Gastrocnemius medialis (tissue), 4 donors: ENCODE measurements at regions of chr15 and their contacts with region 1.

Region 1: GRCh38 chr15:60326824-60327654 is 70.7 kb downstream of the ANXA2 start:
- DNase-seq: no peak
- ATAC-seq: peak in 1 of 2 donors; percentile 53
- H3K4me3 ChIP-seq: no peak overlapping the region
- H3K27ac ChIP-seq: no peak overlapping the region
- H3K4me1 ChIP-seq: peaks cover 0 to 4% of the 10 kb centered on the region in 2 donors
- H3K27me3 ChIP-seq: peaks cover 0 to 2% (median 0%) of the 10 kb centered on the region in 3 donors
- CTCF ChIP-seq: peak; percentile 51 to 85 (median 80)
- POLR2A ChIP-seq: no peak

Region 2: GRCh38 chr15:59528965-59529402 is 798.1 kb before region 1 on chr15:
- in situ Hi-C with region 1: no loop called
- intact Hi-C with region 1: loop called (anchors 5 kb)
- DNase-seq: peak; percentile 48 to 62
- ATAC-seq: peak; percentile 93 to 98
- H3K4me3 ChIP-seq: no peak overlapping the region
- H3K27ac ChIP-seq: no peak overlapping the region
- H3K4me1 ChIP-seq: no peaks in the 10 kb centered on the region
- H3K27me3 ChIP-seq: peaks cover 0 to 7% (median 4%) of the 10 kb centered on the region in 3 donors
- CTCF ChIP-seq: peak; percentile 60 to 83 (median 70)
- POLR2A ChIP-seq: no peak

Region 3: GRCh38 chr15:59725172-59725486 is 601.9 kb before region 1 on chr15:
- in situ Hi-C with region 1: loop called in 3 of 4 experiments (anchors 10 to 25 kb)
- intact Hi-C with region 1: loop called (anchors 10 kb)
- DNase-seq: no peak
- ATAC-seq: no peak
- H3K4me3 ChIP-seq: no peak overlapping the region
- H3K27ac ChIP-seq: peak overlapping the region; percentile 44 to 71 (median 59)
- H3K4me1 ChIP-seq: peaks cover 3 to 11% of the 10 kb centered on the region in 2 donors
- H3K27me3 ChIP-seq: no peaks in the 10 kb centered on the region
- CTCF ChIP-seq: peak in 1 of 5 experiments; percentile 5
- POLR2A ChIP-seq: no peak

Region 4: GRCh38 chr15:60237421-60237820 is 89.6 kb before region 1 on chr15:
- in situ Hi-C with region 1: loop called in 1 of 4 experiments (anchors 25 kb)
- intact Hi-C with region 1: no loop called
- DNase-seq: no peak
- ATAC-seq: no peak
- H3K4me3 ChIP-seq: no peak overlapping the region
- H3K27ac ChIP-seq: no peak overlapping the region
- H3K4me1 ChIP-seq: no peaks in the 10 kb centered on the region
- H3K27me3 ChIP-seq: peaks cover 0 to 3% (median 0%) of the 10 kb centered on the region in 3 donors
- CTCF ChIP-seq: no peak
- POLR2A ChIP-seq: no peak